Colonic mucosa (tissue), 4 donors: ENCODE measurements at regions of chr22 and their contacts with region 1.

Region 1: DNA sequence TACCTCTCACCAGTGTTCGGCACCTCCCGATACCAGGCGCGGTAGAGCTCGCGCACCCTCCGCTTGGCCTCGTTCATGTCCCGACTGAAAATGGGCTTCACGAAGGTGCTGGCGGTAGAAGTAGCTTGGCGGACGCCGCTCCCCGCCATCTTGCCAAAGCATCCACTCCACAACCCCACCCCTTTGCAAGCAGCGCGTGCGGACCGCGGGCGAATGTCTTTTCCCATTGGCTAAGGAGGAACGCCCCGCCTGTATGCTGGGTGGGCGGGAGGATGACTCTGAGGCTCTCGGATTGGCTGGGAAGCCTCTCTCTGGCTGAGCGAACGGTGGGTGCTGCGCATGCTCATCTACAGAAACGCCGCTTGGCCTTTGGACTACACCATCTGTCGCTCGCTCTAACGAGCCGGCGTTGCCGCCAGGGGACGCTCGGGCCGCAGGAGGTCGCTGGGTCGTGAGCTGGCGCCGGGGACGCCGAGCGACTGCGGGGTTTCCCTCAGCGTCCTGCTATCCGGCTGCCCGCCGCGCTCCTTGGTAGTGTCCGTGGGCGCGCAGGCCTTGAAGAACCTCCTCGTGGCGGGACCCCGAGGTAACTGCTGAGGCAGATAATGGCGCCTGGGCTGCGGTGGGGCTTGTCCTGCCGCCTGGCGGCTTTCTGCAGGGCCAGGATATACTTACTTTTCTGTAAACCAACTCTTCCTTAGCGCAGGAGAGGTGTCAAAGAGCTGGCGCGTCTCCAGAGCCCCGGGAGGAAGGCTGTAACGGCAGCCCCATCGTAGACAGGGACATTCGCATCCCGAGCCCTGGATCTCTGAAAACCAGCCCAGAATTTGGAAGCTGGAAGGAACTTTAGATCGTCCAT is at the start of gene NDUFA6:
- DNase-seq: peak; percentile 99
- H3K4me3 ChIP-seq: peak within 1 kb of the TSS; percentile 96
- H3K27ac ChIP-seq: peak within 1 kb of the TSS; percentile 97
- H3K4me1 ChIP-seq: no peaks in the 10 kb centered on the region
- H3K27me3 ChIP-seq: no peaks in the 10 kb centered on the region
- CTCF ChIP-seq: peak; percentile 92
- total RNA-seq, gene NDUFA6: 131 to 154 TPM

Region 2: GRCh38 chr22:42134100-42135020 is 43.5 kb after region 1 on chr22:
- intact Hi-C with region 1: no loop called
- DNase-seq: no peak
- H3K4me3 ChIP-seq: no peak overlapping the region
- H3K27ac ChIP-seq: no peak overlapping the region
- H3K4me1 ChIP-seq: no peaks in the 10 kb centered on the region
- H3K27me3 ChIP-seq: no peaks in the 10 kb centered on the region
- CTCF ChIP-seq: no peak

Region 3: GRCh38 chr22:42376711-42377554 is 286.1 kb after region 1 on chr22:
- intact Hi-C with region 1: no loop called
- DNase-seq: peak; percentile 70
- H3K4me3 ChIP-seq: no peak overlapping the region
- H3K27ac ChIP-seq: no peak overlapping the region
- H3K4me1 ChIP-seq: no peaks in the 10 kb centered on the region
- H3K27me3 ChIP-seq: no peaks in the 10 kb centered on the region
- CTCF ChIP-seq: no peak

Region 4: DNA sequence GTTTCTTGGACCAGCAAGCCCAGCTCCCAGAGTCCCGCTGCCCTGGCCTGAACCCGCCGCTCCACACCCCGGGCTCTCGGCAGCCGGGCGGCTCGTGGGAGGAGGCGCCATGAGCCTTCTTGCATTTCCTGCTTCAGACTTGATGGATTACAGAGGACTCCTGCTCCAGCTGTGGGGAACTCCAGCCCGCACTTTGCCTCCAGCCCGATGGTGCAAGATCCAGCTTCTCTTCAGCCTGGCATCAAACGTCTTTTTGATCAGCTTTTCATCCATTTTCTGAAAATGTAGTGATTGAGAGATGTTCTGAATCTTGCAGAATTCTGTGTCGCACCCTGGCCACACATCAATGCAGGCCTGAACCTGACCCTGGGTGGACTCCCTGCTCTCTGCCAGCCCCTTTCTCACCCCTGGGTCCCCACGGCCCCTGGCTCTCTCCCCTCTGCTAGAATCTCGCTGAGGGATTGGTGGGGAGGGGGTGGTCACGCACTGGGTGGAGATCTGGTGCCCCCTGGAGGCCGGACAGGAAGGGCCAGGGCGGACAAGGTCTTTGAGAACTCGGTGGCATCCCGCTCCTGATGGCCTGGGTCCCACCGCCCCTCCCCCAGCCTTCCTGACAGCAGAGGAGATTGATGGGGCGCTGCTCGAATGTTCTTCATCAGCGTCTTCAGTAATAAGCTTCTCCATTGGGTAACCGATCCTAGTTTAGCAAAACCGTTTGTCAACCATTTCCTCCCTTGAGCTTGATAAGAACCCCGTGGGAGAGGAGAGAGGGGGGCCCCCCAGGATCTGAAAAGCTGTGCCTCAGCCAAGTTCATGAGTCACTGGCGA is 353.5 kb after region 1 on chr22:
- intact Hi-C with region 1: loop called (anchors 5 kb)
- DNase-seq: peak; percentile 96
- H3K4me3 ChIP-seq: peak overlapping the region; percentile 4
- H3K27ac ChIP-seq: peak overlapping the region; percentile 55
- H3K4me1 ChIP-seq: peaks cover 9% of the 10 kb centered on the region
- H3K27me3 ChIP-seq: no peaks in the 10 kb centered on the region
- CTCF ChIP-seq: peak; percentile 34